Activated B cell treated with CpG ODN at 0.5 μM for 24 hours (primary cell): ENCODE measurements at regions of chr19 and their contacts with region 1.

Region 1: GRCh38 chr19:14614099-14614412 is 31.2 kb downstream of the CLEC17A start:
- DNase-seq: no peak
- ATAC-seq: peak; percentile 91
- H3K4me3 Mint-ChIP-seq: peak overlapping the region; percentile 80
- H3K27ac Mint-ChIP-seq: peak overlapping the region; percentile 98
- H3K4me1 Mint-ChIP-seq: peaks cover 61% of the 10 kb centered on the region
- H3K27me3 Mint-ChIP-seq: no peaks in the 10 kb centered on the region
- CTCF ChIP-seq: no peak

Region 2: DNA sequence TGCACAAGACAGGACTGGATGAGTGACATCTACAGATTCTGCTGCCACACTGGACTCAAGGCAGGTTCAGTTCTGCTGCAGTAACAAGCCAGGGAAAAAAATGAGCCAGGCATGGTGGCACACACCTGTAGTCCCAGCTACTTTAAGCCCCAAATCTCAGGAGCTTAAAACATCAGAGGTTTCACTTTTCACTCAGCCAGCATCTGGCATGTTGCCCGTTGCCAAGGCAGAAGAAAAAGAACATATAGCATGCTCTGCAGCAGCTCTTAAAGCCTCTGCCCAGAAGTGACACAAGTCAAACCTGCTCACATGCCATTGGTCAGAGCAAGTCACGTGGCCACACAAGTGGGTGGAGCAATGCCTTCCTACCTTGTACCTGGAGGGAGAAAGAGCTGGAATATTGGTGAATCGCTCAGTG is 247.5 kb before region 1 on chr19:
- CTCF ChIA-PET with region 1: no interaction called
- POLR2A ChIA-PET with region 1: no interaction called
- intact Hi-C with region 1: no loop called
- DNase-seq: peak; percentile 63
- ATAC-seq: peak; percentile 38
- H3K4me3 Mint-ChIP-seq: peak overlapping the region; percentile 22
- H3K27ac Mint-ChIP-seq: peak overlapping the region; percentile 93
- H3K4me1 Mint-ChIP-seq: peaks cover 77% of the 10 kb centered on the region
- H3K27me3 Mint-ChIP-seq: no peaks in the 10 kb centered on the region
- CTCF ChIP-seq: no peak

Region 3: DNA sequence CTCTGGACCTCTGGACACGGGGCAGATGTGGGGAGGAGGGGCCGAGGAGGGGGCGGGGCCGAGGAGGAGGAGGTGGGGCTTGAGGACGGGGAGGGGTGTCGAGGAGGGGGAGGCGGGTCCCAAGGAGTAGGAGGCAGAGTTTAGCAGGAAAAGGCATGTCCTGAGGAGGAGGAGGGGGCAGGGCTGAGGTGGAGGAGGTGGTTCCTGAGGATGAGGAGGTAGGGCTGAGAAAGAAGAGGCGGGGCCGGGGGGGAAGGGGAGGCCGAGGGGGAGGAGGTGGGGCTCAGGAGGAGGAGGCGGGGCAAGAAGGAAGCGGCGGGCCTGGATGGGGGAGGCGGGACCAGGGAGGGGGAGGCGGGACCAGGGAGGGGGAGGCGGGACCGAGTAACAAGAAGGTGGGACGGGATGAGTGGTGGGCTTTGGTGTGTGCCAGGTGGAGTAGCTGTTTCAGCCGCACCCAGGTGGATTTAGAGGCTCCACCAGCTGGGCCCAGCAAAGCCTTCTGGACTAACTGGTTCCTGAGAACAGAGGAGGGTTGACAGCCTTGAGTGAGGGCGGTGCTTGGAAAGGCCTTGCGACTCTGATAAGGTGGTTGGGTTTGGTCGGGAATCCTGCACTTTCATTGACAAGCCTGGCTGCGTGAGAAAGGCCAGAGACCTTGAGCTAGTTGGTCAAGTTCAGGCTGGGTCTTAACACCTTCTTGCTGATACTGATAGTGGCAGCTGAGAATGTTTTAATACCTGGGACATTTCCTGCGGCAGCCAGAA is 76.9 kb before region 1 on chr19:
- CTCF ChIA-PET with region 1: no interaction called
- POLR2A ChIA-PET with region 1: no interaction called
- intact Hi-C with region 1: no loop called
- DNase-seq: no peak
- ATAC-seq: peak; percentile 47
- H3K4me3 Mint-ChIP-seq: no peak overlapping the region
- H3K27ac Mint-ChIP-seq: no peak overlapping the region
- H3K4me1 Mint-ChIP-seq: peaks cover 17% of the 10 kb centered on the region
- H3K27me3 Mint-ChIP-seq: no peaks in the 10 kb centered on the region
- CTCF ChIP-seq: no peak

Region 4: DNA sequence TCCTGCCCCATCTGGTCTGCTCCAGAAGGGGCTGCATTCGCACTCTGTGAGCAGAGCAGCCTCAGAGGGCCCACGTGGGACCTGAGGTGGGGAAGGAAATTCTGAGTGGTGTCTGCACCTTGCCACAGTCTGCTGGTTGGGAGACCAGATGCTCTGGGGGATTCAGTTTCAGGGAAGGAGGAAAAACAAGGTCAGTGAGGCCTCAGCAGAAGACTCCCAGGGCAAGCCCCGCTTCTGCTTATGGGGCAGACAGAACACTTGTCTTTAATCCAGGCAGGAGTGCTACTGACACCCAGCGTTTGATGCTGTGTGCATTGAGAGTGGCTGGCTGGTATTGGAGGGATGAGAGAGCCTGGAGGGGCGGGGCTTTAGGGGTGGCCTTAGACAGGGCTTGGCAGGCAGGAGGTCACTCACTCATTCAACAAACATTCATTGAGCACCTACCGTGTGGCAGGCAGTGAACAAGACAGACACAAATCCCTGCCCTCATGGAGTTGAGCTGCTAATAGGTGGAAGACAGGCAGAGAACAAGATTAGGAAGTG is 36.1 kb before region 1 on chr19:
- CTCF ChIA-PET with region 1: interaction called, 21 read pairs
- POLR2A ChIA-PET with region 1: interaction called, 50 read pairs
- intact Hi-C with region 1: loop called (anchors 1 kb)
- DNase-seq: peak; percentile 52
- ATAC-seq: peak; percentile 59
- H3K4me3 Mint-ChIP-seq: peak overlapping the region; percentile 71
- H3K27ac Mint-ChIP-seq: peak overlapping the region; percentile 75
- H3K4me1 Mint-ChIP-seq: peaks cover 78% of the 10 kb centered on the region
- H3K27me3 Mint-ChIP-seq: no peaks in the 10 kb centered on the region
- CTCF ChIP-seq: no peak

Region 5: GRCh38 chr19:14595516-14595915 is 18.5 kb before region 1 on chr19:
- CTCF ChIA-PET with region 1: no interaction called
- POLR2A ChIA-PET with region 1: interaction called, 14 read pairs
- intact Hi-C with region 1: no loop called
- DNase-seq: no peak
- ATAC-seq: no peak
- H3K4me3 Mint-ChIP-seq: no peak overlapping the region
- H3K27ac Mint-ChIP-seq: peak overlapping the region; percentile 2
- H3K4me1 Mint-ChIP-seq: peaks cover 52% of the 10 kb centered on the region
- H3K27me3 Mint-ChIP-seq: no peaks in the 10 kb centered on the region
- CTCF ChIP-seq: no peak

Region 6: DNA sequence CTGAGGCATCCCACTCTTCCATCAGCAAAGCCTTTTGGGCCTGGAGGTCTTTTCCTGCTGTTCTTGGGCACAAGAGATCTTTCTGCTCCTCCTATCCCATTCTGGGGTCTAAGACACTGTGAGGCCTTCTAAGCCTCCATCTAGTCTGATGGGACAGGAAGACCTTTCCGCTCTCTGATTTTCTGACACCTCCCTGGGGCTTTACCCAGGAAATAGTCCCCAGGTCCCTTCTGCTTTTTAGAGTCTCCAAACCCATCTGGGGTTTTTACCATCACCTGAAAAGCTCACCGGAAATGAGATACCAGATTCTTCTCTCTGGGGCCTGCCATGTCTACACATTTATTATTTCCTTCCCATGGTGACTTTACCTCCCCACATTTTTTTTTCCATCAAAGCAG is 10.1 kb before region 1 on chr19:
- CTCF ChIA-PET with region 1: interaction called, 4 read pairs
- POLR2A ChIA-PET with region 1: interaction called, 75 read pairs
- intact Hi-C with region 1: loop called (anchors 1 kb)
- DNase-seq: peak; percentile 39
- ATAC-seq: peak; percentile 88
- H3K4me3 Mint-ChIP-seq: peak overlapping the region; percentile 72
- H3K27ac Mint-ChIP-seq: peak overlapping the region; percentile 93
- H3K4me1 Mint-ChIP-seq: peaks cover 62% of the 10 kb centered on the region
- H3K27me3 Mint-ChIP-seq: no peaks in the 10 kb centered on the region
- CTCF ChIP-seq: no peak

Region 7: GRCh38 chr19:14632279-14632678 is 18.2 kb after region 1 on chr19:
- CTCF ChIA-PET with region 1: no interaction called
- POLR2A ChIA-PET with region 1: interaction called, 5 read pairs
- intact Hi-C with region 1: loop called (anchors 2 kb)
- DNase-seq: no peak
- ATAC-seq: peak; percentile 71
- H3K4me3 Mint-ChIP-seq: no peak overlapping the region
- H3K27ac Mint-ChIP-seq: no peak overlapping the region
- H3K4me1 Mint-ChIP-seq: peaks cover 15% of the 10 kb centered on the region
- H3K27me3 Mint-ChIP-seq: no peaks in the 10 kb centered on the region
- CTCF ChIP-seq: no peak

Region 8: DNA sequence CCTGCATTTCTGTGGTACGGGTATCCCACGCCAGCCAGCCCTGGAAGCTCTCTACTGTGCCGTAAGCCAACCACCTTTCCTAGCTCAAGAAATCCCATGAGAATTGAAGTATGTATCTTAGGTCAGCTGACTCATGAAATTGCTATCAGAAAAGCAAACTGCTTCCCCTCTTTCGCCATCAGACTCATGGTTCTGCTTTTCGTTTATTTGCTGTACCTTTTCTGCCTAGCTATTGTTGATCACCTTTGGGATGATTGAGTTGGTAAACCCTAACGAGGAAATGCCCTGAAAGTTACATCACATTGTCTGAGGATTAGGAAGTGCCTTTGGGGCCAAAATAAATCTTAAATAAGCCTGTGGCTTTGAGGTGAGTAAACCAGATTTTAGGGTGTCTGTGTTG is 60.7 kb after region 1 on chr19 and contains the start of gene ADGRE3:
- CTCF ChIA-PET with region 1: no interaction called
- POLR2A ChIA-PET with region 1: interaction called, 16 read pairs
- intact Hi-C with region 1: no loop called
- DNase-seq: no peak
- ATAC-seq: peak; percentile 70
- H3K4me3 Mint-ChIP-seq: peak within 1 kb of the TSS; percentile 49
- H3K27ac Mint-ChIP-seq: peak within 1 kb of the TSS; percentile 78
- H3K4me1 Mint-ChIP-seq: peaks cover 32% of the 10 kb centered on the region
- H3K27me3 Mint-ChIP-seq: no peaks in the 10 kb centered on the region
- CTCF ChIP-seq: no peak
- total RNA-seq, gene ADGRE3: not detected in 2 replicates